Common myeloid progenitor, CD34-positive (primary cell): ENCODE measurements at regions of chr14 and their contacts with region 1.

Region 1: DNA sequence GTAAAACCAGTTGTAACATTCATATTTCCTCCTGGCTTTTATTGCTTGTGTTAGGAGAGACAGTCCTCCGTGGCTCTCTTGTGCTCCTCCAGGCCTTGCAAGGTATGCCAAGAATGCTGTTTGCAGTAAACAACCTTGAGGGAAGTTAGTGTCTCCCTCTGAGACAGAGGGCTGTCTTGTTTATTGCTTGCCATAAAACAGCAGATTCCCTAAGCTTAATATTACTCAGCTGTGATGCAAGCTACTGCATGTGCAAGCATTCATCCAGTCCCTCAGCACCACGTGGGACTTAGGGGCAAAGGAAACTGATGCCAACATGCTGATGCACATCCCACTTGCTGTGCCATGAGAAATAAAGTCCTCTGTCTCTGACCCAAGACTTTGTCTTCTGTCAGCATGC is 6.6 kb downstream of the POMT2 start:
- DNase-seq: no peak
- H3K4me3 ChIP-seq: no peak overlapping the region
- H3K27ac ChIP-seq: no peak overlapping the region
- H3K4me1 ChIP-seq: peaks cover 0 to 9% (median 4%) of the 10 kb centered on the region in 4 experiments
- H3K27me3 ChIP-seq: no peaks in the 10 kb centered on the region

Region 2: GRCh38 chr14:77290741-77291140 is 23.3 kb before region 1 on chr14:
- CTCF ChIA-PET with region 1: interaction called, 251 read pairs
- POLR2A ChIA-PET with region 1: no interaction called
- DNase-seq: peak in 1 of 3 donors; percentile 12
- H3K4me3 ChIP-seq: no peak overlapping the region
- H3K27ac ChIP-seq: no peak overlapping the region
- H3K4me1 ChIP-seq: no peaks in the 10 kb centered on the region
- H3K27me3 ChIP-seq: no peaks in the 10 kb centered on the region

Region 3: DNA sequence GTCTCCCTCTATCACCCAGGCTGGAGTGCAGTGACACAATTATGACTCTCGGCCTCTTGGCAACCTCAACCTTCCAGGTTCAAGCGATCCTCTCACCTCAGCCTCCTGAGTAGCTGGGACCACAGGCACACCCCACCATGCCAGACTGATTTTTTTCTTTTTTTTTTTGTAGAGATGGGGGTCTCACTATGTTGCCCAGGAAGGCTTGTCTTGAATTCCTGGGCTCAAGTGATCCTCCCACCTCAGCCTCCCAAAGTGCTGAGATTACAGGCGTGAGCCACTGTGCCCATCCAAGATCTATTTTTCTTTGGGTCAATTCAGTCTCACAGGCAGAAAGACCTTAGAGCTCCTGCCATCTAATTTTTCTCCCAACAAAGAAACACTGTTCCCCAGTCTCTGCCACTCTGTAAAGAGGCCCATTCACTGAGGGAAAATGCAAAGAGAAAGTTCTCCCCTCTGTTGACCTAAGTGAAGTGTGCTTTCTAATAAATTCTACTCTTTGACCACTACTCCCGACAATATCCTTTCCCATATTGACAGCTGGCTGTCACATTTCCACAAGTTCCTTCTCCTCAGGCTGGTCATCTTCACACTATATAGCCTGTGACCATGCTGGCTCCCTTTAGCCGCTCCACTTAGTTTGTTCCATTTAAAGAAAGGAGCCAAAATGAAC is 39.6 kb after region 1 on chr14:
- CTCF ChIA-PET with region 1: no interaction called
- POLR2A ChIA-PET with region 1: no interaction called
- DNase-seq: no peak
- H3K4me3 ChIP-seq: no peak overlapping the region
- H3K27ac ChIP-seq: no peak overlapping the region
- H3K4me1 ChIP-seq: peaks cover 0 to 13% (median 4%) of the 10 kb centered on the region in 4 experiments
- H3K27me3 ChIP-seq: no peaks in the 10 kb centered on the region

Region 4: DNA sequence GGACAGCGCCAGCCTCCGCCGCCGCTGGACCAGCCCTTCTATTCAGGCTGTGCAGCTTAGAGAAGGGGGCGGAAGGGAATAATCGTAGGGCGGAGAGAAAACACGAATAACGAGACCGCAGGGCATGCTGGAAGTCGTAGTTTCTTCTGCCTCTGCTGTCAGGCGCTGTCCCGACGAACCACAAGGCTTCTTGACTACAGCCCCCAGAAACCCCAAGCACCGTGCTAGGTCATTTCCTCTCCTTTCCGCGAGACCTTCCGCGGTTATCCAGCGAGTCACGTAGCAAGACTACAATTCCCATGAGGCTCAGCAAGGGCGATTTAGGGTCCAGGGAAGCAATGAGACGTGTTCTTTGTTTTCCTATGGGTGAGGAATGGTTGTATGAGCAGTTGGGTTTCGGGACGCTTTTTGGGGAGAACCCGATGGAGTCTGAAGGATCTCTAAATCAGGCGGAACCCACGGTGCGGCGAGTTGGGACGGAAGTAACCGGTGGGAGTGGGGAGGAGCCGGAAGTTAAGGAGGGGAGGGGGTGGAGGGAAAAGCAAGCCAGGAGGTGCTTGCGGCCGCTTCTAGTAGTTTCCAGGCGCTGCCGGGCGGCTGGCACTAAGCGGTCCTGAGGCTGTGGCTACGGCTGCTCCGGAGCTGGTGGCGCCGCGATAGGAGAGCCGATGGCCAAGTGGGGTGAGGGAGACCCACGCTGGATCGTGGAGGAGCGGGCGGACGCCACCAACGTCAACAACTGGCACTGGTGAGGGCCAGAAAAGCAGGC is 143.7 kb after region 1 on chr14 and contains the starts of genes AHSA1 and VIPAS39:
- CTCF ChIA-PET with region 1: interaction called, 11 read pairs
- POLR2A ChIA-PET with region 1: no interaction called
- DNase-seq: peak; percentile 99 to 100 (median 100)
- H3K4me3 ChIP-seq: peak within 1 kb of the TSS; percentile 94 to 100 (median 96)
- H3K27ac ChIP-seq: peak within 1 kb of the TSS; percentile 84 to 92
- H3K4me1 ChIP-seq: peaks cover 9 to 23% (median 20%) of the 10 kb centered on the region in 4 experiments
- H3K27me3 ChIP-seq: no peaks in the 10 kb centered on the region